ENCODE measurements at regions of chr6 and their contacts with region 1.

Region 1: DNA sequence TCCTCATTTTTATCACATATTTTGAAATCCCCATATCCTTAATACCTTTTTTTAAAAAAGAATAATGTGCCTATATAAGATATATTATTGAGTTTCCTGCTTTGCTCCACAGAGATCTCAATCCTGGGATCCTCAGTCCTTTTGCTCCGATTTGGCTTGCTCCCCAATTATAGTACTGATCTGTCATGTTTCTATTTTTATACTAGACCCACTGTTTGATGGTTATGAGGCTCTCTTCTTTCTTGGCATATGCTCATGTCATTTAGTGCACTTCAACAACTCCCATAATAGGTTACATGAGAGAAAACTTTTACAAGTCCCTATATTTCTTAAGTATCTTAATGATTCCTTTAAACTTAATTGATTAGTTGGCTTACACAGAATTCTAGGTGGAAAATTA is 958.5 kb upstream of the EPHA7 start:
- DNase-seq: no peak
- ATAC-seq: peak in 3 of 4 donors; percentile 80 to 93 (median 84)
- H3K4me3 ChIP-seq: no peak overlapping the region
- H3K27ac ChIP-seq: no peak overlapping the region
- H3K4me1 ChIP-seq: no peaks in the 10 kb centered on the region
- H3K27me3 ChIP-seq: no peaks in the 10 kb centered on the region
- CTCF ChIP-seq: no peak
- POLR2A ChIP-seq: no peak

Region 2: GRCh38 chr6:94300424-94301144 is 77.3 kb before region 1 on chr6:
- intact Hi-C with region 1: loop called in 1 of 10 experiments (anchors 5 kb)
- DNase-seq: peak; percentile 63 to 87 (median 77)
- ATAC-seq: peak; percentile 97 to 99 (median 98)
- H3K4me3 ChIP-seq: no peak overlapping the region
- H3K27ac ChIP-seq: peak overlapping the region in 7 of 12 donors; percentile 20 to 60 (median 41)
- H3K4me1 ChIP-seq: peaks cover 0 to 3% (median 0%) of the 10 kb centered on the region in 12 donors
- H3K27me3 ChIP-seq: no peaks in the 10 kb centered on the region
- CTCF ChIP-seq: no peak
- POLR2A ChIP-seq: no peak

Region 3: GRCh38 chr6:94454231-94454630 is 76.4 kb after region 1 on chr6:
- intact Hi-C with region 1: no loop called
- DNase-seq: no peak
- ATAC-seq: no peak
- H3K4me3 ChIP-seq: no peak overlapping the region
- H3K27ac ChIP-seq: no peak overlapping the region
- H3K4me1 ChIP-seq: no peaks in the 10 kb centered on the region
- H3K27me3 ChIP-seq: no peaks in the 10 kb centered on the region
- CTCF ChIP-seq: no peak
- POLR2A ChIP-seq: no peak